ENCODE measurements at regions of chr7 and their contacts with region 1.

Region 1: GRCh38 chr7:116809636-116810266 is 52.6 kb upstream of the CAPZA2 start:
- DNase-seq: peak; percentile 92
- ATAC-seq: peak; percentile 58
- H3K4me3 ChIP-seq: peak overlapping the region; percentile 21 to 64 (median 62); a peak in 5 of 6 replicates
- H3K27ac ChIP-seq: peak overlapping the region; percentile 96
- H3K4me1 ChIP-seq: peaks cover 87% of the 10 kb centered on the region
- H3K27me3 ChIP-seq: no peaks in the 10 kb centered on the region
- CTCF ChIP-seq: peak; percentile 82
- EP300 ChIP-seq: peak in 1 of 2 experiments; percentile 93; a peak in 2 of 4 replicates
- POLR2A ChIP-seq: no peak
- RAD21 ChIP-seq: peak; percentile 76

Region 2: GRCh38 chr7:116173051-116174028 is 636.4 kb before region 1 on chr7:
- CTCF ChIA-PET with region 1: no interaction called
- POLR2A ChIA-PET with region 1: no interaction called
- in situ Hi-C with region 1: loop called (anchors 25 kb)
- intact Hi-C with region 1: loop called (anchors 2 kb)
- DNase-seq: peak; percentile 77
- ATAC-seq: peak; percentile 57
- H3K4me3 ChIP-seq: no peak overlapping the region
- H3K27ac ChIP-seq: no peak overlapping the region
- H3K4me1 ChIP-seq: peaks cover 48% of the 10 kb centered on the region
- H3K27me3 ChIP-seq: peaks cover 0 to 28% of the 10 kb centered on the region in 2 experiments; a peak in 4 of 5 replicates
- CTCF ChIP-seq: peak; percentile 67
- EP300 ChIP-seq: peak in 1 of 2 experiments; percentile 66; a peak in 2 of 4 replicates
- POLR2A ChIP-seq: no peak
- RAD21 ChIP-seq: no peak; the same call in 1 of the 2 replicates

Region 3: GRCh38 chr7:116525913-116526861 is 283.6 kb before region 1 on chr7:
- CTCF ChIA-PET with region 1: no interaction called
- POLR2A ChIA-PET with region 1: no interaction called
- in situ Hi-C with region 1: no loop called
- intact Hi-C with region 1: loop called (anchors 10 kb)
- DNase-seq: no peak
- ATAC-seq: peak; percentile 97
- H3K4me3 ChIP-seq: peak overlapping the region; percentile 46 to 70 (median 53); a peak in 5 of 6 replicates
- H3K27ac ChIP-seq: no peak overlapping the region
- H3K4me1 ChIP-seq: peaks cover 21% of the 10 kb centered on the region
- H3K27me3 ChIP-seq: peaks cover 9 to 44% of the 10 kb centered on the region in 2 experiments
- CTCF ChIP-seq: peak; percentile 71
- EP300 ChIP-seq: no peak
- POLR2A ChIP-seq: no peak
- RAD21 ChIP-seq: peak; percentile 80

Region 4: GRCh38 chr7:116598278-116598677 is 211.5 kb before region 1 on chr7:
- CTCF ChIA-PET with region 1: interaction called, 15 read pairs
- POLR2A ChIA-PET with region 1: interaction called, 3 read pairs
- in situ Hi-C with region 1: loop called (anchors 5 kb)
- intact Hi-C with region 1: loop called (anchors 2 kb)
- DNase-seq: no peak
- ATAC-seq: peak; percentile 97
- H3K4me3 ChIP-seq: no peak overlapping the region
- H3K27ac ChIP-seq: no peak overlapping the region
- H3K4me1 ChIP-seq: peaks cover 31% of the 10 kb centered on the region
- H3K27me3 ChIP-seq: no peaks in the 10 kb centered on the region
- CTCF ChIP-seq: peak; percentile 83
- EP300 ChIP-seq: no peak
- POLR2A ChIP-seq: no peak
- RAD21 ChIP-seq: peak; percentile 39; the same call in 1 of the 2 replicates

Region 5: GRCh38 chr7:116741625-116742316 is 68.0 kb before region 1 on chr7:
- CTCF ChIA-PET with region 1: no interaction called
- POLR2A ChIA-PET with region 1: no interaction called
- in situ Hi-C with region 1: no loop called
- intact Hi-C with region 1: loop called (anchors 5 kb)
- DNase-seq: peak; percentile 77
- ATAC-seq: peak; percentile 80
- H3K4me3 ChIP-seq: peak overlapping the region in 1 of 3 experiments; percentile 13; a peak in 1 of 6 replicates
- H3K27ac ChIP-seq: peak overlapping the region; percentile 40
- H3K4me1 ChIP-seq: peaks cover 73% of the 10 kb centered on the region
- H3K27me3 ChIP-seq: no peaks in the 10 kb centered on the region
- CTCF ChIP-seq: no peak
- EP300 ChIP-seq: peak in 1 of 2 experiments; percentile 74; a peak in 1 of 4 replicates
- POLR2A ChIP-seq: no peak
- RAD21 ChIP-seq: no peak

Region 6: GRCh38 chr7:116862234-116862950 is 52.6 kb after region 1 on chr7 and contains the start of gene CAPZA2:
- CTCF ChIA-PET with region 1: no interaction called
- POLR2A ChIA-PET with region 1: interaction called, 4 read pairs
- in situ Hi-C with region 1: no loop called
- intact Hi-C with region 1: loop called (anchors 1 kb)
- DNase-seq: peak; percentile 78
- ATAC-seq: peak; percentile 92
- H3K4me3 ChIP-seq: peak within 1 kb of the TSS; percentile 88 to 98 (median 97)
- H3K27ac ChIP-seq: peak within 1 kb of the TSS; percentile 74
- H3K4me1 ChIP-seq: peaks cover 40% of the 10 kb centered on the region
- H3K27me3 ChIP-seq: no peaks in the 10 kb centered on the region; a peak in 1 of 5 replicates
- CTCF ChIP-seq: no peak
- EP300 ChIP-seq: peak in 1 of 2 experiments; percentile 53; a peak in 1 of 4 replicates
- POLR2A ChIP-seq: peak; percentile 64 to 85
- RAD21 ChIP-seq: no peak; the same call in 1 of the 2 replicates
- total RNA-seq, gene CAPZA2: 199 and 286 TPM in 2 replicates